ENCODE measurements at regions of chrX and their contacts with region 1.

Region 1: GRCh38 chrX:129606918-129607317 is 47.8 kb downstream of the APLN start:
- DNase-seq: no peak
- ATAC-seq: peak; percentile 73

Region 2: GRCh38 chrX:129654419-129655165 is 47.7 kb after region 1 on chrX and contains the start of gene APLN:
- intact Hi-C with region 1: no loop called
- DNase-seq: peak; percentile 73
- ATAC-seq: peak; percentile 68
- total RNA-seq, gene APLN: 15.4 TPM

Region 3: GRCh38 chrX:129726307-129727111 is 119.6 kb after region 1 on chrX:
- intact Hi-C with region 1: loop called (anchors 2 kb)
- DNase-seq: peak; percentile 60
- ATAC-seq: peak; percentile 91

Region 4: GRCh38 chrX:129823115-129823514 is 216.2 kb after region 1 on chrX:
- intact Hi-C with region 1: loop called (anchors 10 kb)
- DNase-seq: no peak
- ATAC-seq: peak; percentile 56

Region 5: DNA sequence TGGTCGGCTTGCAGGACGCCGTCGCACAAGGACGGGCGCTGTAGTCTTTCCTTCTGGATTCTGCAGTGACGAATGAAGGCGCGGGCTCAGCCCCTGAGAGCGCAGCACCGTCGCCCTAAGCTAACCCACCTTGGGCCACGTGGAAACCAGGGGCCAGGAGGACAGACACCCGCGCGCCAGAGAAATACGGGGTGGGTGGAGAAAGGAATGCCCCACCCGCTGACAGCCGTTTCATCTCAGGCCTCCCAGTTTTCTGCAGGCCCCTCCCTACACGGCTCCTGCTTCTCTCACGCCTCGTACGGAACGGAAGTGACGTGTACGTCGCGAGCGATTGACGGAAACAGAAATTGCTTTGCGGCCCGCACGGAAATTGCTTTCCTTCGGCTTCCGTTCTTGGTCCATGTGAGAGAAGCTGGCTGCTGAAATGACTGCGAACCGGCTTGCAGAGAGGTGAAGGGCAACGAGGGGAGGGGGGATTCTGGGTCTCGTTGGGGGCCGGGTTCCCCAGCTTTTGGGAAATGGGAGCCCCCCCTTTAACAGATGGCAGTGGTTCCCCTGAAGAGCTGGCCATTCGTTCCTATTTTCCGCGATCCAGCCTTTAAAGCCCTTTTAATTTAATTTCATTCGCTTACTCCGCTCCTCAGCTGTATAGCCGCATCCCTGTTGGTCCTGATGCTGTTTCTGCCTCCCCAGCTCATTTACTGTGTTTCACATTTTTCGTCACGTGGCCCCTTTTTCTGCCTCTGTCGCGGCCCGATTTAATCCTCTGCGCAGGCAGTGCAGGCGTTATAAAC is 299.1 kb after region 1 on chrX and contains the start of gene UTP14A:
- intact Hi-C with region 1: loop called (anchors 10 kb)
- DNase-seq: peak; percentile 93
- ATAC-seq: peak; percentile 100
- total RNA-seq, gene UTP14A: 6.9 TPM

Region 6: DNA sequence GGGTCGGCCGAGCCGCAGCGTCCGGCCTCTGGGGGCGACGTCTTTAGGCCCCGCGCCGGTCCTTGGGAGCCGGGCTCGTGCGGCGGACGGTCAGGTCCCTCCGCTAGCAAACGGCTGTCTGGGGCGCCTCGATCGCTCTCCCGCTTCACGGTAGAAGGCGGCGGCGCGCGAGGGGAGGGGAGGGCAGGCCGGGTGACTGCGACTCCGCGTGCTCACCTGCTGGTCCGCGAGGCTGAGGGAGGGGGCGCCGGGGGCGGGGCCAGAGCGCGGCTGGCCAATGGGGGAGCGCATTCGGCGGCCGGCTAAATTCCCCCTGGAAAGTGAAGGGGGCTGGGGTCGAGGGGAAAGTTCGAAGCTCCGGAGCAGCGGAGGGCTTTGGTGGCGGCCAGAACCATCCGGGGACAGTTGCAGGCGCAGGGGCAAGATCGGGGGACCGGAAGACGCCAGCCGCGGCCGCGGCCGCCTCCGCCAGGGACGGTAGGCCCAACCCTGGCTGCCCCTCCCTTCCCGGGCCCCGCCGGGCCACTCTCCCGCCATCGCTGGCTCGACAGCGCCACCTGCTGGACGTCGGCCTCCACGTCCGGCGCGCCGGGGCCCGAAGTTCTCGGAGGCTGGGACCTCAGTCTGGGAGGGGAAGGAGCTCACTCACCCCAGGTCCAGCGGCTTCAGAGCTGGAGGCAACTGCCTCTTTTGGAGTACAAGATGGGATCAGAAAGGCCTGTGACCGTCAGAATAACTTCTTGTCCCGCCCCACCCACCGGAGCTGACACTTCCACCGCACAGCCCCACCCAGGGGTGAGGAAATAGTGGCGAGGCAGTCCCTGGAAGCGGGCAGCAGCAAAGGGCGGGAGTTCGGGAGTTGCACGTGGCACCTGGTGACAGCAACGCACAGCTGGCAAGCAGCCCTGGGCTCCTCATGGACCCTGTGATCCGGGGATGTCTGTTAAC is 453.5 kb after region 1 on chrX:
- intact Hi-C with region 1: loop called (anchors 10 kb)
- DNase-seq: peak; percentile 88
- ATAC-seq: peak; percentile 96